ENCODE measurements at regions of chr11 and their contacts with region 1.

Region 1: GRCh38 chr11:26276798-26277424 is 55.0 kb upstream of the ANO3 start:
- DNase-seq: peak; percentile 42
- H3K4me3 ChIP-seq: no peak overlapping the region
- H3K27ac ChIP-seq: no peak overlapping the region
- H3K4me1 ChIP-seq: no peaks in the 10 kb centered on the region
- H3K27me3 ChIP-seq: no peaks in the 10 kb centered on the region
- CTCF ChIP-seq: peak; percentile 79 to 97 (median 85)
- EP300 ChIP-seq: no peak
- POLR2A ChIP-seq: no peak

Region 2: DNA sequence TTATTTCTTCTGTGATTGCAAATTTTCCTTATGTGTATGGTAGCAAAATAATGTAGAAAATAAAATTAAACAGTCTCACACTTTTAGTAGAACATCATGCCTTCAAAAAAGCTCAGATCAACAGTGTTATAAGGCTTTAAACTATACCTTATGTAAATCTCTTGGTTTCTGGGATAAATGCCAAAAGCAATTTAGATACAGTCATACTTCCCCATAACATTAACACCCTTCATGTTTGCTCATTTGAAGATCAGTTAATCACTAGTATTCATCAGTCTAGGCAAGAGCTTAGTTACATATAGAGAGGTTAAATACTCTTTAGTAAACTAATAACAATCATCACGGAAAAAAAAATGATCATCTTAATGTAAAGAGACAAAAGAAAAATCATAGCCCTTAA is 366.8 kb before region 1 on chr11:
- in situ Hi-C with region 1: no loop called
- intact Hi-C with region 1: no loop called
- DNase-seq: no peak
- H3K4me3 ChIP-seq: no peak overlapping the region
- H3K27ac ChIP-seq: no peak overlapping the region
- H3K4me1 ChIP-seq: peaks cover 0 to 11% (median 4%) of the 10 kb centered on the region in 4 donors
- H3K27me3 ChIP-seq: no peaks in the 10 kb centered on the region
- CTCF ChIP-seq: no peak
- EP300 ChIP-seq: no peak
- POLR2A ChIP-seq: no peak

Region 3: GRCh38 chr11:25981998-25982397 is 294.9 kb before region 1 on chr11:
- in situ Hi-C with region 1: loop called (anchors 10 to 25 kb)
- intact Hi-C with region 1: no loop called
- DNase-seq: no peak
- H3K4me3 ChIP-seq: no peak overlapping the region
- H3K27ac ChIP-seq: no peak overlapping the region
- H3K4me1 ChIP-seq: no peaks in the 10 kb centered on the region
- H3K27me3 ChIP-seq: no peaks in the 10 kb centered on the region
- CTCF ChIP-seq: peak; percentile 41 to 49 (median 45)
- EP300 ChIP-seq: no peak
- POLR2A ChIP-seq: no peak

Region 4: DNA sequence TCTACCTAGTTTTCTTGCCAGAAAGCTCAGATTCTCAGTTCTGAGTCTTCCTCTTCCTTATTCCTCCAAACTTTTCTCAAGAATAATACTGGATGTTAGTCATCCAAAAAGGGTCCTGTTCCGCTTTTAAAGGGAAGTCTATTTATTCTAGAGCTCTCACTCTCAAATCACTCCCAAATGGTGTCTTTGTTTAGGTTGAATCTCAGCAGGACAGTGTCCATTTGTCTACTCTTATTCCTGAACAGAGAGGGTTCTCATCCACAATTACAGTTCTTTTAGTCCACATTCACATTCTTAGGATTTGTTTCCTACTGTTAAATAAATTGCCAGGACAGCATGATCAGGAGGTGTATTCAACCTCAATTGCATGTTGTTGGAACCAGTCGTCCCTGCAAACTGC is 233.8 kb after region 1 on chr11:
- in situ Hi-C with region 1: no loop called
- intact Hi-C with region 1: no loop called
- DNase-seq: no peak
- H3K4me3 ChIP-seq: no peak overlapping the region
- H3K27ac ChIP-seq: no peak overlapping the region
- H3K4me1 ChIP-seq: no peaks in the 10 kb centered on the region
- H3K27me3 ChIP-seq: no peaks in the 10 kb centered on the region
- CTCF ChIP-seq: no peak
- EP300 ChIP-seq: no peak
- POLR2A ChIP-seq: no peak

Region 5: GRCh38 chr11:26649884-26650283 is 373.0 kb after region 1 on chr11:
- in situ Hi-C with region 1: loop called in 2 of 4 experiments (anchors 25 kb)
- intact Hi-C with region 1: no loop called
- DNase-seq: peak; percentile 61
- H3K4me3 ChIP-seq: no peak overlapping the region
- H3K27ac ChIP-seq: no peak overlapping the region
- H3K4me1 ChIP-seq: no peaks in the 10 kb centered on the region
- H3K27me3 ChIP-seq: no peaks in the 10 kb centered on the region
- CTCF ChIP-seq: peak; percentile 51 to 67 (median 65)
- EP300 ChIP-seq: no peak
- POLR2A ChIP-seq: no peak

Region 6: DNA sequence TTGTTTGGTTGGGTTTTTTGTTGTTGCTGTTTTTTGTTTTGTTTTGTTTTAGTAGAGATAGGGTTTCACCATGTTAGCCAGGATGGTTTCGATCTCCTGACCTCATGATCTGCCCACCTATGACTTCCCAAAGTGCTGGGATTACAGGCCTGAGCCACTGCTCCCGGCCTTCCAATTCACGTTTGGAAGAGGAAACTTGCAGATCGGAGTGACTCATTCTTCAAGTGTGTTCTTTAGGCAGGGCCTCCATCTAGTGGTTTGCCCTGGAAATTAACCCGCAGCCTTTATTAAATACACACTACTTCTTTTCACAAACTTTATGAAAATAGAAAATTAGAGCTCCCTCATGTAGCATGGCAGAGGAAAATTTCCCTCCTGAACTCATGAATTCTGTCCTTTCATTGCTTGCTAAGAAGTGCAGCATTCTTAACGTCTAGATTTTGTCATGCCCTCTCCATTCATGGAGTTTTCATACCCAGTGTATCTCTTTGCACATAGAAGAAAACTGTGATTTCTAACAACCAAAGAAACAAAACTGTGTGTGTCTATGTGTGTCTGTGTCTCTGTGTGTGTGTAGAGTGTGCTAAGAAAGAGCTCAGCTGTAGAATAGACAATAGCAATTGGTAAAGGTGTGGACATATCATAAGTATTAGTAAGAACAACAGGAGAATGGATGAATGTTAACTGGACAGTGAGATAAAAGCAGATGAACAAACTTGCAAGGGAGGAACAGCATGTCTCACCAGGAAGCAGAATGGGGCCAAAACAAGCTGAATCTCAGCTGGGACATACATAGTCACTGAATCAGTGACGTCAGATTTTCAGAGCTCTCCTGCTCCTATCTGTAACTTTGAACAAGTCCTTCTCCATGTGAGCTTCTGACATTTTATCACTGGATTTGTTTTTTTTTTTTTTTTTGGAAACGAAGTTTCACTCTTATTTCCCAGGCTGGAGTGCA is 882.1 kb after region 1 on chr11:
- in situ Hi-C with region 1: loop called in 2 of 4 experiments (anchors 25 kb)
- intact Hi-C with region 1: no loop called
- DNase-seq: peak; percentile 46
- H3K4me3 ChIP-seq: no peak overlapping the region
- H3K27ac ChIP-seq: no peak overlapping the region
- H3K4me1 ChIP-seq: no peaks in the 10 kb centered on the region
- H3K27me3 ChIP-seq: no peaks in the 10 kb centered on the region
- CTCF ChIP-seq: peak; percentile 79 to 89 (median 82)
- EP300 ChIP-seq: no peak
- POLR2A ChIP-seq: no peak

Region 7: DNA sequence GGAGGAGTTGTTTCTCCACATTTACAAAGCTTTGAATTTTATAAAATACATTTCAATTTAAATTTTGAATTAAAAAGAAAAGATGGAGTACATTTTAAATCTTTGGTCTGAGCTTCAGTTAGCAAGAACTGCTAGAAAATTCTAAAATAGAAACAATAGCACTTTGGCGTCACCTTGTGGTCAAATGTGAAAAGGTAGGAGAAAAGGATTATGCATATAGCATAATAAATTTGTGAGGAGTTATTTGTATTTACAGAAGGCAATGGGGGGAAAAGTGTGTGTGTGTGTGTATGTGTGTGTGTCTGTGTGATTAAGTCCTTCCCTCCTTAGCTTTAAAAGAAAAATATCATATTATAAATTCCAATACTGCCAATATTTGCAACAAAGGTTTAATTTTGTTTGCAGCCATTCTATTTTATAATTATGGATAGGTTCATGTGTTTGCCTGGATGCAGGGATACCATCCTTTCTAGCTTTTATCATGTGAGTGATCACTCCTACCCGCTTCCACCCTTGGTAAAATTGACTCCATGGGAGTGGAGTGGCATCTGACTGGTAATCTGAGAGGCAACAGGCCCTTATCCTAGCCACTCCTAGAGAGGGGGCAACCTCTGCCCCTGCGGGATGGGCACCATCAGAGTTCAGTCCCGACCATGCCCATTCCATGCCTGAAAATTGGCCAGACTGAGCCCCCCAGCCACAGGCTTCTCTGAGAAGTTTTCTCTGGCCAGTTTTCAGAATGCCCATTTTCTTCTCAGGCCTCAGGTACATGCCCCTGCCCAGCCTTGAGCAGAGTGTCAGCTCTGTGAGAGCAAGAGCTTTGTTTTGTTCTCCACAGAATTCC is 1209.2 kb after region 1 on chr11:
- in situ Hi-C with region 1: loop called in 2 of 4 experiments (anchors 25 kb)
- intact Hi-C with region 1: no loop called
- DNase-seq: no peak
- H3K4me3 ChIP-seq: no peak overlapping the region
- H3K27ac ChIP-seq: no peak overlapping the region
- H3K4me1 ChIP-seq: no peaks in the 10 kb centered on the region
- H3K27me3 ChIP-seq: no peaks in the 10 kb centered on the region
- CTCF ChIP-seq: peak; percentile 89 to 96 (median 94)
- EP300 ChIP-seq: no peak
- POLR2A ChIP-seq: no peak

Measured in transverse colon (tissue), 4 donors.